ENCODE measurements at regions of chr20 and their contacts with region 1.

Region 1: DNA sequence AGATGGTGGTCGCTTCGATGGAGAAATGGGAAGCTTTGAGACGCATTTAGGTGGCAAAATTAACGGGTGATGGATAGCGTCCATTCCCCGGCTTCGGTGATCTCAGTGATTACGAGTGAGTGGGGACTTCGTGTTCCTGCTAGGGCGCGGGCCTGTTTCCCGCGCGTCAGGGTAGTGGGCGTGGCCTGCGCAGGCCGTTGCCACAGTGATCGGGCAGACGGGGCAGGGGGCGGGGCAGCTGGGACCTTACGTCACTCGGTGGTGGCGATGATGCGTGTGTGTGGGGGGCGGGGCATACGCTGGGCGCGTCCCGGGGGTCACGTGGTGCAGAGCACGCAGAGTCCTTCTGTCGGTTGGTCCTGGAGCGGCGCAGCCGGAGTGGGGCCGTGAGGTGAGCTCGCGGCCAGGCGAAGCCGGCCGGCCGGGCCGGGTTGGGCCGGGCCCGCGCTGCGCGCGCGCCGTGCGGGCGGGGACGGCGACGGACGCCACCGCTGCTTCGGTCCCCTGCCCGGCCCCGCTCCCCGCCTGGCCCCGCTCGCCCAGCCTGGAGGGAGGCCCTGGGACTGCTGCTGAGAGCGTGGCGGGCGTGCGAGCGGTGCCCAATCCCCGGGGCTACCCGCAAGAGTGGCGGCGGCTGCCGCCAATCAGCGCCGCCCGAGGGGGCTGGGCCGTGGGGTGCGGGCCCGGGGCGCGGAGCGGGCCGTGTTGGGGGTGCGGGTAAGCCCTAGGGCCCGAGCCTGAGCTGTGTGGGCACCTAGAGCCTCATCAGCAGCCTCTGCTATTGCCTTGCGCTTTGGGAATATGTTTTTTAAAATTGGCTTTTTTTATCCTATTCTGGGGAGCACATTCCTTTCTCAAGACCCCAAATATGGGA is at the start of gene PHF20:
- DNase-seq: peak; percentile 96
- H3K4me3 ChIP-seq: peak within 1 kb of the TSS; percentile 70 to 83 (median 76)
- H3K27ac ChIP-seq: peak within 1 kb of the TSS; percentile 87
- H3K4me1 ChIP-seq: peaks cover 42% of the 10 kb centered on the region
- H3K27me3 ChIP-seq: no peaks in the 10 kb centered on the region
- CTCF ChIP-seq: no peak
- POLR2A ChIP-seq: peak; percentile 80
- total RNA-seq, gene PHF20: 45.8 and 46.3 TPM in 2 replicates

Region 2: GRCh38 chr20:35729836-35730582 is 41.9 kb before region 1 on chr20:
- CTCF ChIA-PET with region 1: interaction called, 3 read pairs
- POLR2A ChIA-PET with region 1: interaction called, 3 read pairs
- dilution Hi-C with region 1: no loop called
- intact Hi-C with region 1: loop called (anchors 5 kb)
- DNase-seq: no peak
- H3K4me3 ChIP-seq: no peak overlapping the region
- H3K27ac ChIP-seq: no peak overlapping the region
- H3K4me1 ChIP-seq: peaks cover 5% of the 10 kb centered on the region
- H3K27me3 ChIP-seq: no peaks in the 10 kb centered on the region
- CTCF ChIP-seq: no peak
- POLR2A ChIP-seq: no peak

Region 3: GRCh38 chr20:35883778-35884540 is 112.0 kb after region 1 on chr20:
- CTCF ChIA-PET with region 1: interaction called, 6 read pairs
- POLR2A ChIA-PET with region 1: no interaction called
- dilution Hi-C with region 1: no loop called
- intact Hi-C with region 1: loop called (anchors 1 kb)
- DNase-seq: peak; percentile 88
- H3K4me3 ChIP-seq: peak overlapping the region in 1 of 3 experiments; percentile 1
- H3K27ac ChIP-seq: peak overlapping the region; percentile 95
- H3K4me1 ChIP-seq: peaks cover 13% of the 10 kb centered on the region
- H3K27me3 ChIP-seq: no peaks in the 10 kb centered on the region
- CTCF ChIP-seq: peak; percentile 72 to 77
- POLR2A ChIP-seq: peak; percentile 52

Region 4: GRCh38 chr20:35954200-35954906 is 182.4 kb after region 1 on chr20 and contains the start of gene SCAND1:
- CTCF ChIA-PET with region 1: interaction called, 3 read pairs
- POLR2A ChIA-PET with region 1: interaction called, 3 read pairs
- dilution Hi-C with region 1: no loop called
- intact Hi-C with region 1: loop called (anchors 5 kb)
- DNase-seq: peak; percentile 98
- H3K4me3 ChIP-seq: peak within 1 kb of the TSS; percentile 39 to 93 (median 82)
- H3K27ac ChIP-seq: peak within 1 kb of the TSS; percentile 94
- H3K4me1 ChIP-seq: peaks cover 17% of the 10 kb centered on the region
- H3K27me3 ChIP-seq: no peaks in the 10 kb centered on the region
- CTCF ChIP-seq: peak; percentile 99
- POLR2A ChIP-seq: peak; percentile 79
- total RNA-seq, gene SCAND1: 83.1 and 83.5 TPM in 2 replicates

Measured in endothelial cell of umbilical vein (primary cell).